Transverse colon (tissue), 4 donors: ENCODE measurements at regions of chr6 and their contacts with region 1.

Region 1: GRCh38 chr6:27720607-27721580 is 191.3 kb downstream of the OR2B2 start:
- DNase-seq: no peak
- H3K4me3 ChIP-seq: no peak overlapping the region
- H3K27ac ChIP-seq: no peak overlapping the region
- H3K4me1 ChIP-seq: no peaks in the 10 kb centered on the region
- H3K27me3 ChIP-seq: peaks cover 39% of the 10 kb centered on the region
- CTCF ChIP-seq: no peak
- EP300 ChIP-seq: no peak
- POLR2A ChIP-seq: no peak

Region 2: DNA sequence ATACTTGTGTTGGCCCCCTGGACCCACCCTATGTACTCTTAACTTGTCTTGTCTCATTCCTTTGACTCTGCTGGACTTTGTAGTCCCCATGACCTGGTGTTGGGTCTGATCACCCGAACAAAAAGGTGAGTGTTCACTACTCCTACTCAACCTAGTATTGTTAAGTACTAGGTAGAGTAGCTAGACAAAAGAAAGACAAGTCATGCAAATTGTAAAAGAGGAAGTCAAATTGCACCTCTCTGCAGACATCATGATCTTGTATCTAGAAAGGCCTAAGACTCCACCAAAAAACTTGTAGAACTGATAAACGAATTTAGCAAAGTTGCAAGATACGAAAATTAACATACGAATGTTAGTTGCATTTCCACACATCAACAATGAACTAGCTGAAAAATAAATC is 368.0 kb before region 1 on chr6:
- in situ Hi-C with region 1: no loop called
- intact Hi-C with region 1: no loop called
- DNase-seq: no peak
- H3K4me3 ChIP-seq: no peak overlapping the region
- H3K27ac ChIP-seq: no peak overlapping the region
- H3K4me1 ChIP-seq: no peaks in the 10 kb centered on the region
- H3K27me3 ChIP-seq: no peaks in the 10 kb centered on the region
- CTCF ChIP-seq: no peak
- EP300 ChIP-seq: no peak
- POLR2A ChIP-seq: no peak

Region 3: GRCh38 chr6:27743818-27744217 is 22.9 kb after region 1 on chr6:
- in situ Hi-C with region 1: no loop called
- intact Hi-C with region 1: loop called (anchors 2 kb)
- DNase-seq: no peak
- H3K4me3 ChIP-seq: no peak overlapping the region
- H3K27ac ChIP-seq: no peak overlapping the region
- H3K4me1 ChIP-seq: no peaks in the 10 kb centered on the region
- H3K27me3 ChIP-seq: peaks cover 44% of the 10 kb centered on the region
- CTCF ChIP-seq: no peak
- EP300 ChIP-seq: no peak
- POLR2A ChIP-seq: no peak